ENCODE measurements at regions of chr17 and their contacts with region 1.

Region 1: DNA sequence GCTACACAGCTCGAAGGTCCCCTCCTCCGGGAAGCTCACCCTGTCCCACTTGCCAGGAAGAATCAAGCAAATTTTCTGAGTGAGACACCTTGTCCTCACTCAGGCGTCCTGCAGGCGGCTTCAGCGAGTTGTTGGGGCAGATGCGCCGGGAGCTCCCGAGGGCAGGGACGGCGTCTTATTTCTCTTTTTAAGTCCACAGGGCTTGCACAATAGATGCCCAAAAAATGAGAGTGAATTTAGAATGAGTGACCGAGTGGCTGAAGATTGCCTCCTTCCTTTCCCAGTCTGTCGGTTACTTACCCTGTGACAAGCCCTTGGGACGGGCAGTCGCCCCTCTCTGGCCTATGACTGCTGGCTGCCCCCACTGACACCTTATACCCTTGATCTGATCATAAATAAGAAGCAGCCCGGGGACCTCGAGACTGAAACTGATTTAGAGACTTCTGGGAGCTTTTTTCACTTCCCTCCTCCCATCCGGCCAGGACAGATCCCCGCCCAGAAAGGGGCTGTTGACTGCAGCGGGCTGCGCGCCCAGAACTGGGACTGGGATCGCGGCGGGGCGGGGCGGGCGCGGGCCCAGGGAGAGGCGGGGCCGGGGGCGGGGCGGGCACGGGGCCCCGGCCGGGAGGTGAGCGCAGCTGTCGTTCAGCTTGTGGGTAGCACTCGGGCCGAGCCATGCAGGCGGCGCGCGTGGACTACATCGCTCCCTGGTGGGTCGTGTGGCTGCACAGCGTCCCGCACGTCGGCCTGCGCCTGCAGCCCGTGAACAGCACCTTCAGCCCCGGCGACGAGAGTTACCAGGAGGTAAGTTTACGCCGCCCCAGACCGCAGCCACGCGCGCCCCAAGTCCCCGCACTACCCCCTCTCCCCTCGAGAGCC is at the start of gene TTYH2:
- DNase-seq: peak; percentile 57 to 84
- ATAC-seq: peak; percentile 75 to 80 (median 79)
- H3K4me3 ChIP-seq: peak within 1 kb of the TSS; percentile 51
- H3K4me3 Mint-ChIP-seq: peak within 1 kb of the TSS; percentile 88
- H3K27ac ChIP-seq: peak within 1 kb of the TSS; percentile 60
- H3K27ac Mint-ChIP-seq: peak within 1 kb of the TSS; percentile 81 to 91
- H3K4me1 ChIP-seq: peaks cover 55% of the 10 kb centered on the region
- H3K4me1 Mint-ChIP-seq: peaks cover 34 to 36% of the 10 kb centered on the region in 2 donors
- H3K27me3 ChIP-seq: no peaks in the 10 kb centered on the region
- H3K27me3 Mint-ChIP-seq: no peaks in the 10 kb centered on the region
- CTCF ChIP-seq: no peak
- total RNA-seq, gene TTYH2: 4.3 to 7.9 (median 4.8) TPM

Region 2: GRCh38 chr17:74224959-74225725 is 12.0 kb after region 1 on chr17:
- intact Hi-C with region 1: no loop called
- DNase-seq: no peak
- ATAC-seq: no peak
- H3K4me3 ChIP-seq: no peak overlapping the region
- H3K4me3 Mint-ChIP-seq: no peak overlapping the region
- H3K27ac ChIP-seq: no peak overlapping the region
- H3K27ac Mint-ChIP-seq: no peak overlapping the region
- H3K4me1 ChIP-seq: no peaks in the 10 kb centered on the region
- H3K4me1 Mint-ChIP-seq: peaks cover 0 to 14% of the 10 kb centered on the region in 2 donors
- H3K27me3 ChIP-seq: no peaks in the 10 kb centered on the region
- H3K27me3 Mint-ChIP-seq: peaks cover 0 to 3% of the 10 kb centered on the region in 2 donors
- CTCF ChIP-seq: no peak

Region 3: DNA sequence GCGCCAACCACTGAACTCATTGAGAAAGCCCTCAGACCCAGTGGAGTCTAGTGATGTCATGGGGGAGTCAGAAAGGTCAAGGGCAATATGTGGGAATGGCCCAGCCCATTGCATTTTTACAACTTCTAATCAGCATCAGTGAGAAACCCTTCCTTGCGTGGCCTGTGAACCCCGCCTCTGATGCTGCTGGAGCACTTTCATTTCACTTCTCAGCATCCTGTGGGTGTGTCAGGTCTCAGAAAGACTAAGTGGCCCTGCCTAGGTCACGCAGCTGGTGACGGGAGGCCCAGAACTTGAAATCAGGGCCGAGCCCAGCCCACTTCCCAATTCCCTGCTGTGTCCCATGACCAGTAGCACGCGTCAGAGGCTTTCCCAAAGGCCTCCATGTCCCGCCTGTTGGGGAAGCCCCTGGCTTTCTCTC is 67.0 kb after region 1 on chr17:
- intact Hi-C with region 1: loop called (anchors 5 kb)
- DNase-seq: peak; percentile 60 to 85
- ATAC-seq: peak; percentile 77 to 89 (median 84)
- H3K4me3 ChIP-seq: no peak overlapping the region
- H3K4me3 Mint-ChIP-seq: peak overlapping the region; percentile 50
- H3K27ac ChIP-seq: peak overlapping the region; percentile 75
- H3K27ac Mint-ChIP-seq: peak overlapping the region; percentile 94 to 96
- H3K4me1 ChIP-seq: peaks cover 57% of the 10 kb centered on the region
- H3K4me1 Mint-ChIP-seq: peaks cover 38 to 45% of the 10 kb centered on the region in 2 donors
- H3K27me3 ChIP-seq: no peaks in the 10 kb centered on the region
- H3K27me3 Mint-ChIP-seq: no peaks in the 10 kb centered on the region
- CTCF ChIP-seq: no peak

Region 4: GRCh38 chr17:74354123-74354522 is 141.0 kb after region 1 on chr17:
- intact Hi-C with region 1: loop called (anchors 5 kb)
- DNase-seq: peak; percentile 45 to 69
- ATAC-seq: peak; percentile 54 to 78 (median 71)
- H3K4me3 ChIP-seq: no peak overlapping the region
- H3K4me3 Mint-ChIP-seq: peak overlapping the region; percentile 45
- H3K27ac ChIP-seq: no peak overlapping the region
- H3K27ac Mint-ChIP-seq: no peak overlapping the region
- H3K4me1 ChIP-seq: peaks cover 8% of the 10 kb centered on the region
- H3K4me1 Mint-ChIP-seq: peaks cover 0 to 7% of the 10 kb centered on the region in 2 donors
- H3K27me3 ChIP-seq: peaks cover 47% of the 10 kb centered on the region
- H3K27me3 Mint-ChIP-seq: peaks cover 27 to 42% of the 10 kb centered on the region in 2 donors
- CTCF ChIP-seq: peak; percentile 59

Measured in natural killer cell (primary cell).